Activated naive CD4-positive, alpha-beta T cell treated with anti-CD3 and anti-CD28 coated beads, Interleukin-2, amount 10 ng/mL, durations not matched to agents 7 days and 5 days (primary cell): ENCODE measurements at regions of chr11 and their contacts with region 1.

Region 1: GRCh38 chr11:7449211-7449840 is 36.0 kb upstream of the OLFML1 start:
- DNase-seq: no peak
- H3K4me3 Mint-ChIP-seq: no peak overlapping the region
- H3K27ac Mint-ChIP-seq: no peak overlapping the region
- H3K4me1 Mint-ChIP-seq: no peaks in the 10 kb centered on the region
- H3K27me3 Mint-ChIP-seq: peaks cover 4% of the 10 kb centered on the region

Region 2: DNA sequence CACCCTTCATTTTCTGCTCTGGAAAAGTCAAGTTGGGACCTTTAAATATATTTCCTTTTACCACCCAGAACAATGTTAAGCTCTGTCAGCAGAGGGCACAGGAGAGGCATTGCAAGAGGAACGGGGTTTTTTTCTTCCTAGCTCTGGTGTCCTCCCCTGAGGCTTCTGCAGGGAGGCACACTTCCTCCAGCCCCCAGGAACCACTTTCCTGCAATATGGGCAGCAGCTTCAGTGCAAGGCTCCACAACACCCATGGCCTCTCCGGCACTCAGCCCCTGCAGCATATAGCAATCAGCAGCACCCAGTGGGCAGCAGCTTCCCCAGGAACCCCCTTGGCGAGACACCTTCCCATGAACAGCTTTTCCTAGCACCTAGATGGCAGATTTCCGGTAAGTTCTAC is 96.2 kb before region 1 on chr11:
- CTCF ChIA-PET with region 1: interaction called, 101 read pairs
- DNase-seq: peak; percentile 43
- H3K4me3 Mint-ChIP-seq: no peak overlapping the region
- H3K27ac Mint-ChIP-seq: no peak overlapping the region
- H3K4me1 Mint-ChIP-seq: no peaks in the 10 kb centered on the region
- H3K27me3 Mint-ChIP-seq: peaks cover 4% of the 10 kb centered on the region